Left cardiac atrium (tissue), 4 donors: ENCODE measurements at regions of chr11 and their contacts with region 1.

Region 1: GRCh38 chr11:104583857-104584256 is 314.4 kb downstream of the CASP12 start:
- DNase-seq: no peak
- ATAC-seq: no peak

Region 2: GRCh38 chr11:104541706-104542105 is 42.2 kb before region 1 on chr11:
- intact Hi-C with region 1: loop called in 1 of 2 experiments (anchors 2 kb)
- DNase-seq: no peak
- ATAC-seq: no peak

Region 3: GRCh38 chr11:104650234-104650633 is 66.4 kb after region 1 on chr11:
- intact Hi-C with region 1: no loop called
- DNase-seq: no peak
- ATAC-seq: no peak